ENCODE measurements at regions of chr11 and their contacts with region 1.

Region 1: GRCh38 chr11:124415356-124415923 is 9.2 kb downstream of the OR8B4 start:
- DNase-seq: peak in 1 of 2 donors; percentile 30
- H3K4me3 ChIP-seq: no peak overlapping the region
- H3K27ac ChIP-seq: no peak overlapping the region
- H3K4me1 ChIP-seq: no peaks in the 10 kb centered on the region
- H3K27me3 ChIP-seq: peaks cover 0 to 27% (median 0%) of the 10 kb centered on the region in 3 donors
- CTCF ChIP-seq: peak in 3 of 7 experiments; percentile 40 to 64 (median 53)
- EP300 ChIP-seq: no peak
- POLR2A ChIP-seq: no peak

Region 2: DNA sequence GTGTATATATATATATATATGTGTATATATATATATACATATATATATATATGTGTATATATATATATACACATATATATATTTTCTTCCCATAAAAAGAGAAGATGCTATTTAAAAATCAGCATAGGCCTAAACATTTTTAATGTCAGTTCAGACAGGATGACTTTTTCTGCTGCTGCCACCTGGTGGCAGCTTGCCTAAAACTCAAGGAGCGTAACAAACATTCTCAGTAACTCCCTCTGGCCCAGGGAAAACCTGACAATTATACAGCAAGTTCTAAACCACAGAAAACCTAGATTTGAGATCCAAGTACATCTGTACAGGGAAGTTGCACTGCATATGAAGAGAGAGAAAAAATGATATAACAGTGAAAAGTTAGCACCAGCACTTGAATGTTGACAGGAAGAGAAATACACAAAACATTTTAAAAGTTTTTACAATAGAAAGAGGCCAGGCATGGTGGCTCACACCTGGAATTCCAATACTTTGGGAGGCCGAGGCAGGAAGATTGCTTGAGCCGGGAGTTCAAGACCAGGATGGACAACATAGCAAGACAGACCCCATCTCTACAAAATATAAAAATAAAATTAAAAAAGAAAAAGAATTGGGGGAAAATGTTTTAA is 170.9 kb after region 1 on chr11:
- intact Hi-C with region 1: loop called (anchors 10 kb)
- DNase-seq: peak; percentile 55 to 79
- H3K4me3 ChIP-seq: no peak overlapping the region
- H3K27ac ChIP-seq: no peak overlapping the region
- H3K4me1 ChIP-seq: no peaks in the 10 kb centered on the region
- H3K27me3 ChIP-seq: no peaks in the 10 kb centered on the region
- CTCF ChIP-seq: peak in 4 of 7 experiments; percentile 26 to 53 (median 44)
- EP300 ChIP-seq: no peak
- POLR2A ChIP-seq: no peak